ENCODE measurements at regions of chr4 and their contacts with region 1.

Region 1: DNA sequence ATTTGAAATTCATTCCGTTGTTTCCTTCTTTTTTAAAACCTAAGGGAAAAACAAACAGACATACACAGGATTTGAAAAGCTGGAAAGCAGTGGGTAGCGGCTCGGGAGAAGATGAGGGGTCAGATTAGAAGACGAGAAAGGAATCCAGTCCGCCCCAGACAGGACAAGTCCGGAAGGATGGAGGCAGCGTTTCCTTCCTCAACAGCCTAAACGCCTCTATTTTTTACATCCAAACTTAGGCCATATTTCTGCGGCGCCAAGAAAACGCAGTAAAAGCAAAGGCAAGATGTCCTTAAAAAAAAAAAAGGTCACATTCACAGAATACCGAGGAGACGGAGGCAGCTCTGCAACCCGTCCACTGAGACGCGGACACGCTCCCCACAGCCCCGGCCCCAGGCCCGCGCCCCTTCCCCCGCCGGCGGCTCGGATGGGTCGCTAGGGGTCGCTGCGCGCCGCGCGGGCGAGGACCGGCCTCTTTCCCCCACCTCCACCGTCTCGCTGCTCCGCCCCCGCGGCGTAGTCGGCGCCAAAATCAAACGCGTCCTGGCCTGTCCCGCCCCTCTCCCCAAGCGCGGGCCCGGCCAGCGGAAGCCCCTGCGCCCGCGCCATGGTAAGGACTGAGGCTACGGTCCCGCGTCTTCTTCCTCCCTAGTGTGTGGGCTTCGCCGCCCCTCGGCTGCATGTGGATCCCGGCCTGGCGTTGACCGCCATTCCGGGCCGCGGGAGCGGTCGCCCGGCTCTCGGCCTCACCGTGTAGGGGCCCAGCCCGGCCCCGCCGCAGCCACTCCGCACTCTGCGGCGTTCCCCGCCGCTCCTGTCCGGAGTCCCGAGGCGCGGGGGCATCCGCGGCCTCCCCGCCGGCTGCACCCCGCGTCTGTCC is at the start of gene MND1:
- DNase-seq: peak; percentile 80
- H3K4me3 ChIP-seq: peak within 1 kb of the TSS; percentile 58 to 95 (median 86)
- H3K27ac ChIP-seq: peak within 1 kb of the TSS; percentile 93
- H3K4me1 ChIP-seq: peaks cover 12% of the 10 kb centered on the region
- H3K27me3 ChIP-seq: no peaks in the 10 kb centered on the region
- CTCF ChIP-seq: peak in 1 of 2 donors; percentile 84
- total RNA-seq, gene MND1: 0.83 to 10.4 TPM

Region 2: GRCh38 chr4:153432968-153433753 is 88.8 kb after region 1 on chr4:
- CTCF ChIA-PET with region 1: no interaction called
- dilution Hi-C with region 1: no loop called
- in situ Hi-C with region 1: no loop called
- intact Hi-C with region 1: loop called (anchors 1 kb)
- DNase-seq: peak; percentile 94
- H3K4me3 ChIP-seq: no peak overlapping the region
- H3K27ac ChIP-seq: peak overlapping the region; percentile 52
- H3K4me1 ChIP-seq: peaks cover 11% of the 10 kb centered on the region
- H3K27me3 ChIP-seq: no peaks in the 10 kb centered on the region
- CTCF ChIP-seq: peak; percentile 75 to 84

Region 3: DNA sequence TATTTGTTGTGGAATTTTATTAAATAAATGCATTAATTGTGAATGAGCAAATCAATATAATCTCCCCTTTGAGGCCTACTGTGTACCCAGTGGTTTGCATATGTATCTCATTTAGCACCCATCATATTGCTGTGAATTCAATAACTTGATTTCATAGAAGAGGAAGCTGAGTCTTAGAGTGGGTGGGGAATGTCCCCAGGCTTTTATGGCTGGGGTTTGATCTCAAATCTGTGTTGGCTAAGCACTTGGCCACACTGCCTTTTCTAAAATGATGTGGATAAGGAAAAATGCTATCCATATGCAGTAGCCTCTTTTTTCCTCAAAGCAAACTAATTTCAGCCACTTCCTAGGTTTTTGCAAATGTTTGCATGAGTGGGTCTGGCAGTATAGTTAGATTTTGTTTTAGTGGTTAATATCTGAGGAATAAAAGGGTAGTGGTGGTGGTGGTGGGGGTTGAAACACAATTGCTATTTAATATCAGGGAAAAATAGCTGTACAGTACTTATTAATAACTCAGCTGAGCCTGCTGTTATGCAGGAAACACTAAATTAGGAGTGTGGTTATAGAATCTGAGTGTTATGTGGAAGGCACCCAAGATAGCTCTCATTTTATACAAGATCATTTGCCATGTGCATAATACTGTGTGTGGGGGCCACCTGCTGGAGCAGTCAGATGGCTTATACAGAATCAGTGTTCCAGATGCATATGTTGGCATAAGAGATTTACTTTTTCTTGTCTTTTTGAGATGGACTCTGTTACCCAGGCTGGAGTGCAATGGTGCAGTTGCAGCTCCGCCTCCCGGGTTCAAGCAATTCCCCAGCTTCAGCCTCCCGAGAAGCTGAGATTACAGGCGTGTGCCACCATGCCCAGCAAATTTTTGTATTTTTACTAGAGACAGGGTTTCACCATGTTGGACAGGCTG is 229.8 kb after region 1 on chr4:
- CTCF ChIA-PET with region 1: interaction called, 4 read pairs
- dilution Hi-C with region 1: no loop called
- in situ Hi-C with region 1: loop called (anchors 5 to 10 kb)
- intact Hi-C with region 1: loop called (anchors 1 kb)
- DNase-seq: peak; percentile 61
- H3K4me3 ChIP-seq: no peak overlapping the region
- H3K27ac ChIP-seq: no peak overlapping the region
- H3K4me1 ChIP-seq: peaks cover 6% of the 10 kb centered on the region
- H3K27me3 ChIP-seq: no peaks in the 10 kb centered on the region
- CTCF ChIP-seq: peak; percentile 53 to 69

Region 4: DNA sequence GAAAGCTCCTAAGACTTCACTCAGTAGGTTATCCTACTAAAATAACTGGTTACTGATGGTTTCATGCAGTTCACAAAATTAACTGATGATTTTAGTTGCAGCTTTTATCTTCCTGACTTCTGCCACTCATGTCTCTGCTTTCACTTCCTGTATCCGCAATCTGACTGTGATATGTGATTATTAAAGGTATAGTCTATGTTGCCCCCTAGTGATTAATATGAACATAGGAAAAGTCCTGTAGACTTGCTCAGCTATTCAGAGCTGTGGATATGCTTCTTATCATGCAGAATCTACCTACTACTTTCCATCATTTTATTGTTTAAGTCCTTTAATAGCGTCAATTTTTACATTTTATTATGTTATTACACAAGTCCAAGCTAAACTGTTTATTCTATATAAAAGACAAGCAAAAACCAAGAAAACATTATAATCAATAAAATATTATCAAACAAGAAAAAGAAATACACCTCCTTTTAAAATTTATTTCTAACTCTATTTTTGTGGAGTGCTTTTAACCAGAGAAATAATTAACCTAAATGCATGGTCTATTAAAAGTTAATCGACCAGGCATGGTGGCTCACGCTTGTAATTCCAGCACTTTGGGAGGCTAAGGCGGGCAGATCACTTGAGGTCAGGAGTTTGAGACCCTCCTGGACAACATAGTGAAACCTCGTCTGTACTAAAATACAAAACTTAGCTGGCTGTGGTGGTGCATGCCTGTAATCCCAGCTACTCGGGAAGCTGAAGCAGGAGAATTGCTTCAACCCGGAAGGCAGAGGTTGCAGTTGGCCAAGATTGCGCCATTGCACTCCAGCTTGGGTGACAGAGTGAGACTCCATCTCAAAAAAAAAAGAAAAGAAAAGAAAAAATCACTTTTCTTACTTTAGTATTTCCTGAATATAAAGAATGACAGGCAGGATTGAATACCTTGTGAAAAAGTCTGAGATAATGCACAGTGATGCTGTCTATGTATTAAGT is 299.3 kb after region 1 on chr4:
- CTCF ChIA-PET with region 1: interaction called, 3 read pairs
- dilution Hi-C with region 1: no loop called
- in situ Hi-C with region 1: no loop called
- intact Hi-C with region 1: loop called (anchors 1 kb)
- DNase-seq: peak; percentile 54
- H3K4me3 ChIP-seq: no peak overlapping the region
- H3K27ac ChIP-seq: no peak overlapping the region
- H3K4me1 ChIP-seq: peaks cover 4% of the 10 kb centered on the region
- H3K27me3 ChIP-seq: no peaks in the 10 kb centered on the region
- CTCF ChIP-seq: peak; percentile 48 to 56

Measured in mammary epithelial cell (primary cell).